Prostate gland (tissue), 2 donors: ENCODE measurements at regions of chr3 and their contacts with region 1.

Region 1: DNA sequence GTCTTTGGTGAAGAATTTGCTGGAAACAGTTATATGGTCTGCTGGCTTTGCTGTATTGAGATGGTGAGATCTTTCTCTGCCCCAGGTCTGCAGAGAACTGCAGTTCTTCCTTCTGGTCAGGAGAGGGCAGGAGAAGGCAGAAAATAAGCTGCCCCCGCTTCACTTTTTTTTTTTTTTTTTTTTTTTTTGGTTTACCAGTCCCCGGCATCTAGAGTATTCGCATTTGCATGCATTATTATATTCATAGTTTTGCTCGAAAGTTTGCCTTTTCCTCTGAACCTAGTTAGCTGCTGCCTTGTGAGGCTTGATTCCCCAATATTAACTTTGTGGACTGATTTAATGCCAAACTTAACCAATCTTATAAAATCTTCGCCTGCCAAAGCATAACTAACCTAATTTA is 10.6 kb upstream of the PARL start:
- DNase-seq: peak; percentile 17
- H3K4me3 ChIP-seq: no peak overlapping the region
- H3K27ac ChIP-seq: no peak overlapping the region
- H3K4me1 ChIP-seq: no peaks in the 10 kb centered on the region
- H3K27me3 ChIP-seq: no peaks in the 10 kb centered on the region
- CTCF ChIP-seq: peak; percentile 57 to 76 (median 68)
- POLR2A ChIP-seq: no peak

Region 2: DNA sequence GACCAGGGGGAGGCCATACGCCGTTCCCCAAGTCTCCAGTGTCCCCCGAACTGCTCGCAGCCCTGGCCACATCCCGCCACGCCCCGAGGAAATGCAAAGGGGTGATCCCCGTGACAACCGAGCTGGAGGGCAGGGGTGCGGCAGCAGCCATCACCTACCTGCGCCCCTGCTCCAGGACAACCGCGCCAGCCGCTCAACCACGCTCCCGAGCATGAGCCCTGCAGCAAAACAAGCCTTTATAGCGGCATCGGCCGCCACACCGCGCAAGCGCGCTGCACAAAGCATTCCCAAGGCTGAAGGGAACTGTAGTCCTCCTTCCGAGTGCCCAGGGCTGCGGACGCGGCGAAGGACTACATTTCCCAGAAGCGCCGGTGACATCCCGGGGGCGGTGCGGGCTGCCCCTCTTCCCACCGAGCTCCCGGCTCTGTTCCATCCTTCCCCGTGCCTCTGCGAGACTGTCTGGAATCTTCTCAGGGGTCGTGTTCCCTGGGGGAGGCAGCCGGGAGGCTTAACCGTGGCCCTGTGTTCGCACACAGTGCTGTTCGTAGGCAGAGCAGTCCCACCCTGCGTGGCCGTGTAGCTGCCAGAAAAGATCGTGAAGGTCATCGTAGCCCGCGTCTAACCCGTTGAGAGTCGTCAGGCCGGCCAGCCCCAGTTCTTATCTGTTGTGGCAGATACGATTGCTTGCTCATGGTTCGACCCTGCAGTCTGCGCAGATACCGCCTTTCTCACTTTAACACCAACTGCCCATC is 122.6 kb after region 1 on chr3 and contains the start of gene ABCC5:
- intact Hi-C with region 1: loop called (anchors 1 kb)
- DNase-seq: peak; percentile 89
- H3K4me3 ChIP-seq: peak within 1 kb of the TSS; percentile 95 to 100
- H3K27ac ChIP-seq: peak within 1 kb of the TSS; percentile 73 to 75
- H3K4me1 ChIP-seq: no peaks in the 10 kb centered on the region
- H3K27me3 ChIP-seq: no peaks in the 10 kb centered on the region
- CTCF ChIP-seq: peak in 2 of 4 experiments; percentile 47 to 52
- POLR2A ChIP-seq: peak; percentile 31
- total RNA-seq, gene ABCC5: 17.9 to 43.6 TPM

Region 3: GRCh38 chr3:184085389-184085852 is 190.1 kb after region 1 on chr3:
- intact Hi-C with region 1: no loop called
- DNase-seq: no peak
- H3K4me3 ChIP-seq: no peak overlapping the region
- H3K27ac ChIP-seq: no peak overlapping the region
- H3K4me1 ChIP-seq: no peaks in the 10 kb centered on the region
- H3K27me3 ChIP-seq: no peaks in the 10 kb centered on the region
- CTCF ChIP-seq: no peak
- POLR2A ChIP-seq: no peak

Region 4: GRCh38 chr3:184135149-184135910 is 240.0 kb after region 1 on chr3 and contains the start of gene EIF2B5:
- intact Hi-C with region 1: loop called (anchors 5 kb)
- DNase-seq: peak; percentile 88
- H3K4me3 ChIP-seq: peak within 1 kb of the TSS; percentile 68 to 92
- H3K27ac ChIP-seq: peak within 1 kb of the TSS; percentile 94
- H3K4me1 ChIP-seq: peaks cover 16% of the 10 kb centered on the region
- H3K27me3 ChIP-seq: no peaks in the 10 kb centered on the region
- CTCF ChIP-seq: peak; percentile 38 to 80 (median 59)
- POLR2A ChIP-seq: peak; percentile 49
- total RNA-seq, gene EIF2B5: 54.9 to 61.5 TPM

Region 5: DNA sequence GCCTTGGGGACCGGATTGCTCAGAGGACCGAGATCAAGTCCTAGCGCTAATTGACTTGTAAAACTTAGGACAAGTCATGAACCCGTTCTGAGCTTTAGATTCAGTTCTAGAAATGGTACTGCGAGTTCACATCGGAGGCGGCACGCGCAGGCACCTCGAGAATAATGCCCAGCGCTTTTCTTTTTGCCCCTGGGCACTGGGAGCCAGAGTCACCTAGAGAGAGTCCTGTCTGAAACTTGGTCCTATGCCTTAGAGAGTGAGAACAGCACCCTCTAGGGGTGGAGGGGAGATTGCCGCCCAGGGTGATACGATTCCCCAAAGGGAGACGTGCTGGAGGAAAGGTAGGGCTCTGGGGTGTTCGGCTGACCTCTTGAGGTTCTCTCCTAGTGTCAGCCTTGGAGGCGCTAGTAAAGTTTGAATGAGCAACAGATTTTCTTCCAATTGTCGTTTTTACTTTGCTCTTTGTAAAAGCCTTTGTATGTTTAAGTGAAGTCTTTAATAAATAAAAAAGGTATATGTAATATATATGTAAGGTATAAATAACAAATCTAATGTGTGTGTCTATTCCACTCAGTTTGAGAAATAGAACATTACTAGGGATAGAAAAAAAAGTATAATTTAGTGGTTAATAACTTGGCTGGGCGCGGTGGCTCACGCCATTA is 355.0 kb after region 1 on chr3:
- intact Hi-C with region 1: loop called (anchors 5 kb)
- DNase-seq: peak; percentile 89
- H3K4me3 ChIP-seq: peak overlapping the region; percentile 81 to 97
- H3K27ac ChIP-seq: peak overlapping the region; percentile 20 to 77
- H3K4me1 ChIP-seq: no peaks in the 10 kb centered on the region
- H3K27me3 ChIP-seq: no peaks in the 10 kb centered on the region
- CTCF ChIP-seq: peak; percentile 82 to 87 (median 85)
- POLR2A ChIP-seq: no peak